ENCODE measurements at regions of chr12 and their contacts with region 1.

Region 1: GRCh38 chr12:97148941-97149559 is 242.0 kb downstream of the NEDD1 start:
- DNase-seq: peak; percentile 72 to 85
- H3K4me3 ChIP-seq: no peak overlapping the region
- H3K4me3 Mint-ChIP-seq: no peak overlapping the region
- H3K27ac Mint-ChIP-seq: no peak overlapping the region
- H3K4me1 ChIP-seq: no peaks in the 10 kb centered on the region
- H3K4me1 Mint-ChIP-seq: no peaks in the 10 kb centered on the region
- H3K27me3 ChIP-seq: no peaks in the 10 kb centered on the region
- H3K27me3 Mint-ChIP-seq: peaks cover 9% of the 10 kb centered on the region
- CTCF ChIP-seq: peak; percentile 88 to 94

Region 2: GRCh38 chr12:97164936-97165335 is 15.9 kb after region 1 on chr12:
- CTCF ChIA-PET with region 1: no interaction called
- POLR2A ChIA-PET with region 1: interaction called, 10 read pairs
- intact Hi-C with region 1: no loop called
- DNase-seq: no peak
- H3K4me3 ChIP-seq: no peak overlapping the region
- H3K4me3 Mint-ChIP-seq: no peak overlapping the region
- H3K27ac Mint-ChIP-seq: no peak overlapping the region
- H3K4me1 ChIP-seq: no peaks in the 10 kb centered on the region
- H3K4me1 Mint-ChIP-seq: no peaks in the 10 kb centered on the region
- H3K27me3 ChIP-seq: no peaks in the 10 kb centered on the region
- H3K27me3 Mint-ChIP-seq: no peaks in the 10 kb centered on the region
- CTCF ChIP-seq: no peak

Region 3: DNA sequence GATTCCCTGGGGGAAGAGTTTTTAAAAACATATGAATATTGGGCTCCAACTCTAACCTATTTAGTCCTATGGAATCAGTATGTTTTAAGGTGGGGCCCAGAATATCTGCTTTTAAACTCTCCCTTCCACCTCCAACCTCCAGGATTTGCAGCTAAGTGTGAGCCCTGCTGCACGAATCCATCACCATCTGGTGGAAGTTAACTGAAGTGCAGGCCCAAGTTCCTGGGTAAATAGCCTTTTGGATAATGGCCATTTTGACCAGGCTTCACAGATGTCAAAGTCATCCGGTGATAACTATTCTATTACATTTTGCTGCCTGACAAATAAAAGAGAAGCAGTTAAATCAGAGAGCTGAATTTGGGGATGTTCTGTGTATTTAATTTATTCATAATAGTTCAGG is 255.5 kb after region 1 on chr12:
- CTCF ChIA-PET with region 1: interaction called, 7 read pairs
- POLR2A ChIA-PET with region 1: no interaction called
- intact Hi-C with region 1: loop called (anchors 1 kb)
- DNase-seq: peak; percentile 61 to 62
- H3K4me3 ChIP-seq: no peak overlapping the region
- H3K4me3 Mint-ChIP-seq: no peak overlapping the region
- H3K27ac Mint-ChIP-seq: no peak overlapping the region
- H3K4me1 ChIP-seq: no peaks in the 10 kb centered on the region
- H3K4me1 Mint-ChIP-seq: no peaks in the 10 kb centered on the region
- H3K27me3 ChIP-seq: no peaks in the 10 kb centered on the region
- H3K27me3 Mint-ChIP-seq: no peaks in the 10 kb centered on the region
- CTCF ChIP-seq: peak; percentile 85

Region 4: DNA sequence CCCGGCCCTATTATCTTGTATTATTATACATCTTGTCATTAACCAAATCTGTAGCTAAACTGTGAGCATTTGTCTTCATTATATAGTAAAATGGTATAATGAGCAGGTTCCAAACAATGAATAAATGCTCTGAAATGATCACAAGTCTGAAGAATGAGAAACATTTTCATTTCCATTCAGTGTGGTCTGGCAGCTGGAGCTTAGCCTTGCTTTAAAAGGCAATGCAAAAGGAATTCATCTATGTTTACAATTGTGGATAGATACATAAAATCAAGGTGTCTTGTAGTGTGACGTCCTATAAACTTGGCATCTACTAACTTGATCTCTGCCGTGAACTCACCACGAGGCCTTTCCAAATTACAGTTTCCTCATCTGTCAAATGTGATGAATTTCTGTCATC is 481.8 kb after region 1 on chr12:
- CTCF ChIA-PET with region 1: no interaction called
- POLR2A ChIA-PET with region 1: no interaction called
- intact Hi-C with region 1: no loop called
- DNase-seq: no peak
- H3K4me3 ChIP-seq: no peak overlapping the region
- H3K4me3 Mint-ChIP-seq: no peak overlapping the region
- H3K27ac Mint-ChIP-seq: no peak overlapping the region
- H3K4me1 ChIP-seq: no peaks in the 10 kb centered on the region; the same call in 1 of the 2 replicates
- H3K4me1 Mint-ChIP-seq: no peaks in the 10 kb centered on the region
- H3K27me3 ChIP-seq: no peaks in the 10 kb centered on the region
- H3K27me3 Mint-ChIP-seq: peaks cover 2% of the 10 kb centered on the region
- CTCF ChIP-seq: no peak

Region 5: GRCh38 chr12:98154850-98155249 is 1005.8 kb after region 1 on chr12:
- CTCF ChIA-PET with region 1: no interaction called
- POLR2A ChIA-PET with region 1: no interaction called
- intact Hi-C with region 1: loop called (anchors 10 kb)
- DNase-seq: peak; percentile 68 to 69
- H3K4me3 ChIP-seq: no peak overlapping the region
- H3K4me3 Mint-ChIP-seq: no peak overlapping the region
- H3K27ac Mint-ChIP-seq: no peak overlapping the region
- H3K4me1 ChIP-seq: peaks cover 12% of the 10 kb centered on the region
- H3K4me1 Mint-ChIP-seq: peaks cover 28% of the 10 kb centered on the region
- H3K27me3 ChIP-seq: no peaks in the 10 kb centered on the region
- H3K27me3 Mint-ChIP-seq: no peaks in the 10 kb centered on the region
- CTCF ChIP-seq: peak; percentile 46 to 67

Region 6: GRCh38 chr12:98397316-98398105 is 1248.5 kb after region 1 on chr12:
- CTCF ChIA-PET with region 1: no interaction called
- POLR2A ChIA-PET with region 1: no interaction called
- intact Hi-C with region 1: loop called (anchors 1 kb)
- DNase-seq: peak; percentile 70 to 79
- H3K4me3 ChIP-seq: no peak overlapping the region
- H3K4me3 Mint-ChIP-seq: peak overlapping the region; percentile 66
- H3K27ac Mint-ChIP-seq: peak overlapping the region; percentile 65
- H3K4me1 ChIP-seq: peaks cover 36% of the 10 kb centered on the region
- H3K4me1 Mint-ChIP-seq: peaks cover 16% of the 10 kb centered on the region
- H3K27me3 ChIP-seq: no peaks in the 10 kb centered on the region
- H3K27me3 Mint-ChIP-seq: no peaks in the 10 kb centered on the region
- CTCF ChIP-seq: peak; percentile 74 to 82

Measured in Caco-2 (cell line).